Dorsolateral prefrontal cortex (tissue), 120 donors: ENCODE measurements at regions of chr18 and their contacts with region 1.

Region 1: DNA sequence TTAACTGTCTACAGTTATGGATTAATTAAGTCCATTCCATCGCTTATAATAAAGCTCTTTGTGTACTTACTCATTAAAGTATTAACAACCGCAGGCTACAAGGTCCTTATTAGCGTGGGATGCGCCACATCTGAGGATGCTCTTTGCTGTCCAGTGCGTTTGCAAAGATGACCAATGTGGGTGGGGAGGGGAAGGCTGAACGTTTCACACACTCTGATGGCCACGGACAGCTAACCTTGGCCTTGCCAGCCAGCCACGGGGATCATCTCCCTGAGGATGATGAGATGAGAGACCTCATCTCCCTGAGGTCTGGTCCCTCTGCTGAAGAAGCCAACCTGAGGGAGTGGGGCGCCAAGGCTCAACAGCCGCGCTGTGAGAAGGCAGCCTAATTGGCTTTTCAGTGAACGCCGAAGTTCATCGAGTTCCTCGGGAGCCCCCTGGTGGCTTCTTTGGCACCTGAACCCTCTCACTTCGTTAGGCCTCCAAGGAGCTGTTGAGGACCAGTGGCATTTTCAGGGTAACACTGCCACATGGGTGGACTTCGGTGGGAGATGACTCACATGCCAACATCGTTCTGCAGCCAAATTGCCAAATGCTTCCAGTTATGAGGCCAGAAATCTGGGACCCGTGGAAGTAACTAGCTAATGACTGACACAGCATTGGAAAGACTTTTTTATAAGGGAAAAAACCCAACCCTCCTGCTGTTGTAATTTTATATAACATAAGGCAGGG is 69.3 kb upstream of the SEC11C start:
- DNase-seq: peak; percentile 86 to 94 (median 90)
- H3K4me3 ChIP-seq: peak overlapping the region in 8 of 59 donors; percentile 4 to 46 (median 26)
- H3K27ac ChIP-seq: peak overlapping the region in 2 of 59 donors; percentile 22 to 50
- H3K27me3 ChIP-seq: no peaks in the 10 kb centered on the region
- CTCF ChIP-seq: peak; percentile 58 to 98 (median 92)

Region 2: GRCh38 chr18:58535340-58536201 is 534.8 kb before region 1 on chr18:
- intact Hi-C with region 1: loop called in 1 of 2 experiments (anchors 5 kb)
- DNase-seq: no peak
- H3K4me3 ChIP-seq: no peak overlapping the region
- H3K27ac ChIP-seq: no peak overlapping the region
- H3K27me3 ChIP-seq: peaks cover 0 to 5% (median 0%) of the 10 kb centered on the region in 45 donors
- CTCF ChIP-seq: no peak

Region 3: DNA sequence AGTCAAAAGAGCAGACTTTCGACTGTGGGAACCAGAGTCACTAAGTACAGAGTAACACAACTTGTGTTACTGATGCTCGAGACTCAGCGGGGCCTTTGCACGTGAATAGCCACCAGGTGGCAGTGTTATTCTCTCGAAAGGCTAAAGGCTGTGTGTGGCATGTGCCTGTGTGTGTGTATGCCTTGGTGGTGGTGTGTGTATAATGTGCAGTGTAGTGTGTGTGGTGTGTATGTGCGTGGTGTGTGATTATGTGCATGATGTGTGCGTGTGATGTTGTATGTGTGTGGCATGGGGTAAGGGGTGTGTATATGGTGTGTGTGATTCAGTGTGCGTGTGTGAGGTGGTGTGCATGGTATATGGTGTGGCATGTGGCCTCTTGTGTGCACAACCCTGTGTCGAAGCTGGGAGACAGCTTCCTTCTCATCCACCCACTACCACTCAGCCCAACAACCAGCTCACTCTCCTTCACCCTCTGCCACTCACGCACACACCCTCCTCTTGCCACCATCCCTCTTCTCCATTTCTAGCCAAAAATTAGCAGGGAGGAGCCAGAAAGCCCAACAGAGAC is 288.6 kb before region 1 on chr18:
- intact Hi-C with region 1: loop called (anchors 2 kb)
- DNase-seq: peak; percentile 75 to 96 (median 86)
- H3K4me3 ChIP-seq: no peak overlapping the region
- H3K27ac ChIP-seq: peak overlapping the region in 3 of 59 donors; percentile 8 to 31 (median 18)
- H3K27me3 ChIP-seq: no peaks in the 10 kb centered on the region
- CTCF ChIP-seq: peak; percentile 86 to 99 (median 97)

Region 4: GRCh38 chr18:58870130-58870529 is 200.2 kb before region 1 on chr18:
- intact Hi-C with region 1: loop called (anchors 5 to 10 kb)
- DNase-seq: no peak
- H3K4me3 ChIP-seq: no peak overlapping the region
- H3K27ac ChIP-seq: peak overlapping the region in 53 of 59 donors; percentile 5 to 100 (median 81)
- H3K27me3 ChIP-seq: no peaks in the 10 kb centered on the region
- CTCF ChIP-seq: no peak